Activated naive CD8-positive, alpha-beta T cell treated with anti-CD3 and anti-CD28 coated beads, Interleukin-2, amount 10 ng/mL, durations not matched to agents 7 days and 5 days (primary cell): ENCODE measurements at regions of chr1 and their contacts with region 1.

Region 1: DNA sequence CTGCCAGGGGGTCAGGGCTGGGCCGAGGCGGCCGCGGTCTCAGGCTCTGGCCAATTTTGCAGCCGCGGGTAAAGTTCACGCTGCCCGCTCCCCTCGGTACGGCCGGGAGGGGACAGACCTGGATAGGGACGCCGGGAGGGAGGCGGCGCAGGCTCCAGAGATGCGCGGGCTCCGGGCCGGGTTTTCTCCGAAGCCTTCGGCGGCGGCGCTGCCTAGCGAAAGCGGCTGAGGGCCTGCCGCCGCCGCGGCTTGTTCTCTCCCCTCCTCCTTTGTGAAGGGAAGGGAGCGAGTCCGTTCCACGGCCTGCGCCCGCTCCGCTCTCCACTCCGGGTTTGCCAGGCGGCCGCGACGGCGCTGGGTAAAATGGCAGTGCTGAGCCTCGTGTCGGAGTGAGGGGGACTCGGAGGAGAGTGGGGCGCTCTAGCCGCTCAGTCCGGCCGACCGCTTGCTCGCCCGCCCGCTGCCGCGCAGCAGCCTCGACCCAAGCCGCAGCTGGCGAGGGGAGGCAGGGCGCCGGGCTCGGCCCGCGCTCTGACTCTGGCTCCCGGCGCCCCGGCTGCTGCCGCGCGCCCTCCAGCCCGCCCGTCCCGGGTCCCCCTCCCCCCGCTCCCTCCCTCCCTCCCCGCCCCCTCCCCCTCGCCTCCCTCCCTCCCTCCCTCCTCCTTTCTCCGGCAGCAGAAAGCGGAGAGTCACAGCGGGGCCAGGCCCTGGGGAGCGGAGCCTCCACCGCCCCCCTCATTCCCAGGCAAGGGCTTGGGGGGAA is at the start of gene ARID1A:
- DNase-seq: peak; percentile 98
- ATAC-seq: peak; percentile 64
- H3K4me3 Mint-ChIP-seq: peak within 1 kb of the TSS; percentile 90
- H3K27ac Mint-ChIP-seq: peak within 1 kb of the TSS; percentile 97
- H3K4me1 Mint-ChIP-seq: peaks cover 20% of the 10 kb centered on the region
- H3K27me3 Mint-ChIP-seq: no peaks in the 10 kb centered on the region
- total RNA-seq, gene ARID1A: 118 to 124 TPM

Region 2: DNA sequence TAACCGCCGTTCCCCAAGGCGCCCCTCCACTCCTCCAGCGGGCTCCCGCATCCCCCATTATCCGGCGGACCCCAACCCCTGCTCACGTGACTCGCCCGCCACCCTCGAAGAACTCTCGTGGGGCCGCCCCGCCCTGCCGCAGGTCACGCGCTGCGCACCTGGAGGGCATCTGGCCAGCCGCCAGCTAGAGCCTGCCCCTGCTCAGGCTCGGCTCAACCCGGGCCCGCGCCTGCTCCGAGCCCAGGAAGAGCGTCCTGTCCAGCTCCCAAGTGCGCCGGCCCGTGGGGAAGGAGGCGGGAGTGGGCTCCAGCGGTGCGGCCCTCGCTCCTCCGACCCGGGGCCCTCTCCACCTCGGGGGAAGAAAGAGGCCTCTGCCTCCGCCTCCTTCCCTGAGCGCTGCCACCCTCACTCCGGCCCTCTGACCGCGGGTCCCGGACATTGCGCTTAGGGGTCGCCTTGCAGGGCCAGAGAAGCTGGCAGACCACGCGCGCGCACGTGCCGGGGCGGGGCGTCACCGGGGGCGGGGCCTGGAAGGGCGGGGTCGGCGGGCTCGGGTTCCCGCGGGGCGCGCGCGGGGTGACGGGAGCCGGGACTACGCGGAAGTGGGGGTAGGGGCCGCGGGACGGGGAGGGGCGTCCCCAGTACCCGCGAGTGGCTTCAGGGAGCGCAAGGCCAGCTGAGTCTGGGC is 194.9 kb before region 1 on chr1:
- POLR2A ChIA-PET with region 1: interaction called, 12 read pairs
- DNase-seq: peak; percentile 97
- ATAC-seq: peak; percentile 68
- H3K4me3 Mint-ChIP-seq: peak overlapping the region; percentile 89
- H3K27ac Mint-ChIP-seq: peak overlapping the region; percentile 95
- H3K4me1 Mint-ChIP-seq: peaks cover 19% of the 10 kb centered on the region
- H3K27me3 Mint-ChIP-seq: no peaks in the 10 kb centered on the region

Region 3: GRCh38 chr1:26557008-26557695 is 138.4 kb before region 1 on chr1:
- POLR2A ChIA-PET with region 1: no interaction called
- DNase-seq: no peak
- ATAC-seq: no peak
- H3K4me3 Mint-ChIP-seq: no peak overlapping the region
- H3K27ac Mint-ChIP-seq: no peak overlapping the region
- H3K4me1 Mint-ChIP-seq: no peaks in the 10 kb centered on the region
- H3K27me3 Mint-ChIP-seq: no peaks in the 10 kb centered on the region

Region 4: DNA sequence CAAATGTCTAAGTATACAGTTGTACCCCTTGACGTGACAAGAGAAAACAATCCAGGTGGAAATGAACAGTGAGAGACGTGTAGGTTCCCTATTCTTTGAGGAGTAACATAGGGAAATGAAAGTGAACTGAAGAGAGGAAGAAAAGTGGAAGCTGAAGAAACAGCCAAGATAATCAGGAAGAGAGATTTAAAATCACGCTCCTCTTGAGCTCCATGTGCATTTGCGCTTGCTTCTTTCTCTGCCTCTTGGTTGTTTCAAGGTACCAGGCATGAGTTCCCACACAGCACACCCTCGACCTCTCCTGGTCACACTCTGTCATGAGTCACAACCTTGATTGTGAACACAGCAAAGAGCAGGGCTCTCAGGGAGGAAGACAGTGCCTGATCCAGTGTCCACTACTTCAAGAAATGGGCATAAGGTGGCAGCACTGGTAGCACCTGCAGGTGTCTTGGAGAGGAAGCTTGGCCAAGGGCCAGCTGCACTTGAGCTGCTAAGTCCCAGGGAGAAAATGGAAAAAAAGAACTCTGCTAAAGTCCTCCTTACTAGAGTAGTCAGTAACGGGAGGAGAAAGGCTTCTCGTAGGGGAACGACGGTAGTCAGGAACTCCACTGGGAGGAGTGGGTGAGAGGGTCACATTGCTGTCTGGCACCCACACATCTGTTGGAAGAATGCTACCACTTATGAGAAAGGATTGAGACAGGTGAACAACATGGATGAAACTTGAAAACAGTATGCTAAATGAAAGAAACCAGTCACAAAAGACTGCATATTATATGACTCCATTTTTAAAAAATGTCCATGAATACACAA is 18.0 kb before region 1 on chr1:
- POLR2A ChIA-PET with region 1: interaction called, 26 read pairs
- DNase-seq: peak; percentile 40
- ATAC-seq: peak; percentile 98
- H3K4me3 Mint-ChIP-seq: peak overlapping the region; percentile 41
- H3K27ac Mint-ChIP-seq: peak overlapping the region; percentile 56
- H3K4me1 Mint-ChIP-seq: peaks cover 18% of the 10 kb centered on the region
- H3K27me3 Mint-ChIP-seq: no peaks in the 10 kb centered on the region

Region 5: DNA sequence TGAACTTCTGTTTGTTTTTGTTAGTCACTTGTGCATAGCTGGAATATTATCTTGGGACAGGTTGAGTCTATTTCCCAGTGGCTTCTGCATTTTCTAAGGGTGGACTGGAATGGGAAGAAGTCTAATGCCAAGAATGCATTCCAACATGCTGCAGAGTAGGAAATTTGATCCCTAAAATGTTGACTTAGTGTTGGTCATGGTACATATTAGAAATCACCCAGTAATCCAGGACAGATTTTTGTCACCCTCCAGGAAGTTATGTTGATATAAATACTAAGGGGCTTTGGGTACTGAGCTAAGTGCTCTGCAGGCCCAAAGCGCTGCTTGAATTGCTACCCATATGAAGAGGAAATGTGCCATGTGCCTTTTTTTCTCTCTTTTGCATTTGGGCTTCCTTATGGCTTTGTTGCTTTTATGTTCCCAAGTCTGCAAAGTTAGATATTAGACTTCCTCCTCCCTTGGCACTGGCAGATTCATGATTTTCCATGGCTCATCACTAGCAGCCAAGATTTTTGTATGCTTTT is 10.3 kb after region 1 on chr1:
- POLR2A ChIA-PET with region 1: interaction called, 41 read pairs
- DNase-seq: no peak
- ATAC-seq: no peak
- H3K4me3 Mint-ChIP-seq: peak overlapping the region; percentile 47
- H3K27ac Mint-ChIP-seq: peak overlapping the region; percentile 28
- H3K4me1 Mint-ChIP-seq: peaks cover 32% of the 10 kb centered on the region
- H3K27me3 Mint-ChIP-seq: no peaks in the 10 kb centered on the region

Region 6: DNA sequence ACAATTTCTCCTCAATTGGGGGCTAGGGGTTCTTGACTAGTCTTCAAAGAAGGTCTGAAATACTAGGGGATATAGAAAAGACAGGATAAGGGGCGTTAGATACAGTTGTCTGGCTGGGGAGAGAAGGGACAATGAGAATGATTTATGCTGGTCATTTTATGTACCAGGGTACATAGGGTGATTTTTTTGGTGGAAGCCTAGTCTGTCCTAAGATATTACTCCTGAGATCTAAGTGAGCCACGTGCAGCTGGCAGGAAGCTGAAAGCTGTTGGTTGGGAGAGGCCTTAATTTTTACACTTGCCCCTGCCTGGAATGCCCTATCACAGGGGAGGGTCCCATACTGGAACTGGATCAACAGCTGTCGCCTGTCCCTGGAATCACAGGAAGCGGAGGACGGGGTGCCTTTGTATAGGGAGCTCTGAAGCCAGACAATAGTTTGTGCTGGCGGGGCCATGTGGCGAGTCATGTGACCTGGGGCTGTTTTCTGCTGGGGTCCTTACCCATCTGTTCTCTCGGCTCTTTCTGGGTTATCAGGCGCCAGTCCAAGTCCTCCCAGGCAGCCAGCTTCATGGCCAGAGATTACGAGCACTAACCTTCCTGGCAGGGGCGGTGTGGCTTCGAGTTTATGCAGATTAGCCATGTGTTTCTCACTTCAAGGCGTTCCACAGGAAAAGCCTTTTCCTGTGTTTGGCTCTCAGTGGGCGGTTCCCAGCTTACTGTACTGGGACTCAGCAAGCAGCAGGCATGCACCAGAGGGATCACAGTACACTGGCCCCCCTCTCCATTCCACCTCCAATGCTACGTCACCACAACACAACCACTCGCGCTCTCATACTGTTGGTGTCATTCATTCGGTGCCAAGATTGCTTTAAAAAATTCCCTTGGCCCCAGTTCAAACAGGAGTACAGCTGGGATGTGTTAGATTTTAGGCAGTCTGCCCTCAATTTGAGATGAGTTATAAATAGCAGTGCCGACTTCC is 27.8 kb after region 1 on chr1:
- POLR2A ChIA-PET with region 1: interaction called, 16 read pairs
- DNase-seq: peak; percentile 39
- ATAC-seq: peak; percentile 68
- H3K4me3 Mint-ChIP-seq: peak overlapping the region; percentile 51
- H3K27ac Mint-ChIP-seq: peak overlapping the region; percentile 5
- H3K4me1 Mint-ChIP-seq: peaks cover 67% of the 10 kb centered on the region
- H3K27me3 Mint-ChIP-seq: no peaks in the 10 kb centered on the region

Region 7: DNA sequence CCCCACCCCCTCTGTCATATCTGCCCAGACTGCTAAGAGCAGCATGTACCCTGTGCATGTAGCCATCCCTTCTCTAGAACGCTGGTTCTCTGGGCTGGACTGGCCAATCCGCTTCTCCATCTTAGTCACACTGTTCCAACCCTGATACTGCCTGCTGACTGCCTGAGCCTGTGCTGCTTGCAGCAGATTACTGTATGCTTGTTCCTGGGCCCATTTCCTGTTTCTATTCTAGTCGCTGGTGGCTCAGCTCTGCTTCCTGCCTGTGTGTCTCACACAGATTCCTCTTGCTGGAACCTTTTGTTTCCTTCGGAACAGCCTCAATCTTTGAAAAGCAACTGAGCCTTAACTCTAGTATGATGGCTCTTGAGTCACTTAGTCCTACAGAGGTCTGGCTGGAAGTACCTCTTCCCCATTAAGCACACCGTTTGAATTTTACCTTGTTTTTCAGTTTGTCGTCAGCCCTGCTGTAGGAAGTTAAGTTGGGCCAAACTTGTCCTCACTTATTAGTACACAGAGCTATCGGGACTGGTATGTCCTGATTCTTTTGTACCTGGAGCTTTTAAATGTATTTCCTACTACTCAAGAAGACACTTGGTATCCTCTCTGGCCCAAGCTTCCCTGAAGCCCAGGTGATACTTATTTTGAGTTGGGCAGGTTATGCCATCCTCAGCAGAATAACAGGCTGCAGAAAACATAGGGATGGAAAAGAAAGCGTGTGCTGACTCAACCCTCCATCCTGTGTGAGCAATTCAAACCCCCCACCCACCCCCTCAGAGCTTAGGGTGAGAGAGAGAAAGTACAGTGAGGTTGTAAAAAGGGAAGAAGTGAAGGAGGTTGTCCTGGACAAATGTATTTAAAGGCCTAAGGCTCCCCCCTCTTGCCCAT is 48.8 kb after region 1 on chr1:
- POLR2A ChIA-PET with region 1: interaction called, 39 read pairs
- DNase-seq: peak; percentile 65
- ATAC-seq: peak; percentile 99
- H3K4me3 Mint-ChIP-seq: peak overlapping the region; percentile 85
- H3K27ac Mint-ChIP-seq: peak overlapping the region; percentile 97
- H3K4me1 Mint-ChIP-seq: peaks cover 61% of the 10 kb centered on the region
- H3K27me3 Mint-ChIP-seq: no peaks in the 10 kb centered on the region

Region 8: DNA sequence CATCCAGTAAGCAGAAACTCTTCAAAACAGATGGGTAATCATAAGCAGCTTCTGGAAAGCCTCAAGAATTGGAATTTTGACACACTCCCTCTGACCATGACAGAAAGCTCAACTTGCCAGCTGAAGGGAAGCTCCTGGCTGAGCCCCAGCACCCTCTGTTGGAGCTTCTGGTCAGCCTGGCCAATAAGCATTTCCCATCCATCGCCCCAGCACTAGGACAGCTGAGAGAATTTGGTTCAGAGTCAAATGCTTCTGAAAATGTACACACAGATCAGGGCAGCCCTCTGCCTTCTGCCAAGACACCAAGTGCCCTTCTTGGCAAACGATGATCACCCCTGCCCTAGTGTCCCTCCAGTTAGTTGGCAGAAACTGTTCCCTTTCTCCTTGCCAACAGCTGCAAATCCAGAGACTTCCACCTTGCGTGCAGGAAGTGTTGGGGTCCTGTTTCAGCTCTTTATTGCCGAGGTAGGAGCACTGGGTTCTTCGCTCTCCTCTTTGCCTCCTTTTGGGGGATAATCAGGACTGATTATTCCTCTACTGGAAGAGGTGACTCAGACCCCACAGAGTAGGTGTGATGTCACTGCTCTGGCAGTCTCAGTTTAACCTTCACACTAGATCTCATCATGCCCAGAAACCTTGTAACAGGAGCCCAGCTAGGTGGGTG is 104.1 kb after region 1 on chr1:
- POLR2A ChIA-PET with region 1: interaction called, 17 read pairs
- DNase-seq: no peak
- ATAC-seq: peak; percentile 70
- H3K4me3 Mint-ChIP-seq: peak overlapping the region; percentile 67
- H3K27ac Mint-ChIP-seq: peak overlapping the region; percentile 93
- H3K4me1 Mint-ChIP-seq: peaks cover 41% of the 10 kb centered on the region
- H3K27me3 Mint-ChIP-seq: no peaks in the 10 kb centered on the region

Region 9: GRCh38 chr1:26856604-26857469 is 161.3 kb after region 1 on chr1:
- POLR2A ChIA-PET with region 1: no interaction called
- DNase-seq: no peak
- ATAC-seq: no peak
- H3K4me3 Mint-ChIP-seq: no peak overlapping the region
- H3K27ac Mint-ChIP-seq: no peak overlapping the region
- H3K4me1 Mint-ChIP-seq: no peaks in the 10 kb centered on the region
- H3K27me3 Mint-ChIP-seq: no peaks in the 10 kb centered on the region